ENCODE measurements at regions of chr2 and their contacts with region 1.

Region 1: DNA sequence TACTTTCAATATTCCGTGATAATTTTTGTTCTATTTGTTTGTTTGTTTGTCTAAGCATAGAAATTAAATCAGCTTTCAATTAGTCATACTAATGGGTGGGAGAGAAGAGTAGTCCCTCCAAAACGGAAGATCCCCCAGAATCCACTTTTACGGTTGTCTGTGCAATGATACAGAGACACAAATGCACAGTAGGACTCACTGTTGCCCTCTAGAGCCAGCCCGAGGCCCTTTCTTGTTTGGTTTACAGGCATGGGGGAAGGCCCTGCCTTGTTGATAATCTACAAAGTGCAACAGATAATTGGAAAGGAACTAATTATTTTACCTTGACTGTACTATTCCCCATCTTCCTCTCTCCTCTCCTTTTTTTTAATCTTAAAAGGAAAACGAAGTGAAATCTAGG is 121.1 kb downstream of the ACOXL start:
- DNase-seq: peak; percentile 73
- ATAC-seq: no peak
- H3K4me3 Mint-ChIP-seq: no peak overlapping the region
- H3K27ac Mint-ChIP-seq: peak overlapping the region; percentile 79
- H3K4me1 Mint-ChIP-seq: peaks cover 65% of the 10 kb centered on the region
- H3K27me3 Mint-ChIP-seq: peaks cover 7% of the 10 kb centered on the region

Region 2: GRCh38 chr2:110865188-110865587 is 11.7 kb after region 1 on chr2:
- CTCF ChIA-PET with region 1: interaction called, 26 read pairs
- POLR2A ChIA-PET with region 1: interaction called, 4 read pairs
- DNase-seq: peak; percentile 53
- ATAC-seq: peak; percentile 88
- H3K4me3 Mint-ChIP-seq: peak overlapping the region; percentile 32
- H3K27ac Mint-ChIP-seq: peak overlapping the region; percentile 86
- H3K4me1 Mint-ChIP-seq: peaks cover 74% of the 10 kb centered on the region
- H3K27me3 Mint-ChIP-seq: peaks cover 2% of the 10 kb centered on the region

Region 3: DNA sequence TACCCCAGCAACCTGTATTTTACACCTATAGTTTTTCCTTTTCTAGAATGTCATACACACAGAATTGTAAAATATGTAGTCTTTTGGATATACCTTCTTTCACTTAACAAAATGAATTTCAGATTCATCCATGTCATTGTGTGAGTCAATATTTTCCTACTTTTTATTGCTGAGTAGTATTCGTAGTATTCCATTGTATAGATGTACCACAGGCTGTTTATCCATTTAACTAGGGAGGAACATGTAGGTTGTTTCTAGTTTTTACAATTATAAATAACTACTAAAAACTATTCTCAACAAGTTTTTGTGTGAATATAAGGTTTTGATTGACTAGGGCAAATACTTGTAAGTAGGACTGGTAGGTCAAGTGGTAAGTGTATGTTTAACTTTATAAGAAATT is 66.2 kb after region 1 on chr2:
- CTCF ChIA-PET with region 1: no interaction called
- POLR2A ChIA-PET with region 1: no interaction called
- DNase-seq: no peak
- ATAC-seq: no peak
- H3K4me3 Mint-ChIP-seq: no peak overlapping the region
- H3K27ac Mint-ChIP-seq: no peak overlapping the region
- H3K4me1 Mint-ChIP-seq: no peaks in the 10 kb centered on the region
- H3K27me3 Mint-ChIP-seq: peaks cover 27% of the 10 kb centered on the region

Measured in activated CD8-positive, alpha-beta T cell treated with anti-CD3 and anti-CD28 coated beads, Interleukin-2, amount 10 ng/mL, durations not matched to agents 7 days and 5 days (primary cell).